ENCODE measurements at regions of chr5 and their contacts with region 1.

Region 1: DNA sequence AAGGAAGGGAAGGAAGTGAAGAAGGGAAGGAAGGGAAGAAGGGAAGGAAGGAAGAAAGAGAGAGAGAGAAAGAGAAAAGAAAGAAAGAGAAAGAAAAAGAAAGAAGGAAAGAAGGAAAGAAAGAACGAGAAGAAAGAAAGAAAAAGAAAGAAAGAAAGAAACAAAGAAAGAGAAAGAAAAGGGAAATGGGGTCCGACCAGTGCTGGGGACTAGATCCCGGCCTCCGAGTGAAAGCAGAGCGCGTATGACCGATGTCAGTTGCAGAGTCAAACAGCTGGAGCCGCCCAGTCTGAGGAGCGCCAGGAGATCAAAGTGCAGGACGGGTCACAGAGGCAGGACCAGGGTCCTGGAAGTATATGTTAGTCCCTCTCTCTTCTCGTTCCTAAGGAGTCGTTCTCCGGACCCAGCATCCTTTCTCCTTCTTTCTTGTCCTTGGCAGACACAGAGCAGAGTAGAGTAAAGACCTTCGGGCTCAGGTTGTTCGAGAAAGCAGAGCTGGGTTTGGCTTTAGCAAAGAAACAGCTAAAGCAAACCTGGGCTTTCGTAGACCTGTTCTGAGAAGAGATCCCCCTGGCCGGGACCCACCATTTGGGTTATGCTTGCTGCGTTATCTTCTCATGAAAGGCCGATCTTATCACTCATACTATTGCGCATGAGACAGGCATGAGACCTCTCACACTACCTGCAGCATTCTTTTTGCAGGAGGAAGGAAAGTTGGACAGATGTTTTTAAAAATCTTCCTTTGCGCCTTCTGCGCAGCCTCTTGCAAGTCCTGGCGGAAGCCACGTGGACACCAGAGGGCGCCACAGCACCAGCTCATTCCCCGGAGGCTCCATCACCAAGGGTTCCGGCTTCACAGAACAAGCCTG is 305.2 kb upstream of the MSX2 start:
- DNase-seq: peak; percentile 60 to 83 (median 73)
- ATAC-seq: peak; percentile 57
- H3K4me3 ChIP-seq: peak overlapping the region; percentile 24 to 32
- H3K4me3 Mint-ChIP-seq: peak overlapping the region; percentile 73
- H3K27ac ChIP-seq: no peak overlapping the region
- H3K27ac Mint-ChIP-seq: no peak overlapping the region
- H3K4me1 ChIP-seq: peaks cover 7% of the 10 kb centered on the region
- H3K4me1 Mint-ChIP-seq: peaks cover 13% of the 10 kb centered on the region
- H3K27me3 ChIP-seq: peaks cover 0 to 4% of the 10 kb centered on the region in 2 experiments
- H3K27me3 Mint-ChIP-seq: peaks cover 28% of the 10 kb centered on the region
- CTCF ChIP-seq: peak; percentile 58

Region 2: DNA sequence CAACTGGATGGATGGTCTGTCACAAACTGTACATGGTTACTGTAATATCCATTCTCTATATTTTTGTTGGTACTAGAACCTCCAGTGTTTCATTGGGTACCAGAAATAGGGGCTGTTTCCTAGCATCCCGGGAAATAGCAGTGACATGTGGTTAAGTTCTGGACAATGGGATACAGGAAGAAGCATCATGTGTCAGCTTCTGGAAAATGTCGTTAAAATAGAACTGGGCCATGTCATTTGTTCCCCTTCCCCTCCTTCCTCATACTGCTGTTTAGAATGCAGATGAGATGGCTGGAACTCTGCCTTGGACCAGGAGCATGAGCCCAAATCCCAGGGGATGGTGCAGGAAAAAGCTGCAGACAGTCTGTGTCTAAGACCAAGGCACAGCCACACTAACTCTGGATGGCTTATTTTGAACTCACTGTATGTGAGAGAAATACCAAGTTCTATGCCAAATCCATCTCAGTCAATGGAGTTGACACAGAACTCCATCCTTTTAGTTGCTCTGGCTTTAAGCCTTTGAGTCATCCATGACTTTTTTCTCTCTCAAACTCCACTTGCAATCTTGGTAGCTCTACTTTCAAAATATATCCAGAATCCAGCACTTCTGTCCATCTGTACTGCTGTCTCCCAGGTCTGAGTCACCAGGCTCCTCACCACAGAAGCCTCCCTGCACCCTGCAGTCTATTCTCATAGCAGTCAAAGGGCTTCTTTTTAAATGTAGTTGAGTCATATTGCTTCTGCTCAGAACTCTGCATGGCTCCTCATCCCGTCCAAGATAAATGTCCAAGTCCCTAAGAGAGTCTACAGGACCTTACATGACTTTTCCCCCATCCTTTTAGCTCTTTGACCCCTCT is 189.4 kb before region 1 on chr5:
- CTCF ChIA-PET with region 1: no interaction called
- POLR2A ChIA-PET with region 1: no interaction called
- intact Hi-C with region 1: no loop called
- DNase-seq: no peak
- ATAC-seq: no peak
- H3K4me3 ChIP-seq: no peak overlapping the region
- H3K4me3 Mint-ChIP-seq: no peak overlapping the region
- H3K27ac ChIP-seq: no peak overlapping the region
- H3K27ac Mint-ChIP-seq: no peak overlapping the region
- H3K4me1 ChIP-seq: no peaks in the 10 kb centered on the region
- H3K4me1 Mint-ChIP-seq: no peaks in the 10 kb centered on the region
- H3K27me3 ChIP-seq: no peaks in the 10 kb centered on the region
- H3K27me3 Mint-ChIP-seq: peaks cover 15% of the 10 kb centered on the region
- CTCF ChIP-seq: no peak

Region 3: DNA sequence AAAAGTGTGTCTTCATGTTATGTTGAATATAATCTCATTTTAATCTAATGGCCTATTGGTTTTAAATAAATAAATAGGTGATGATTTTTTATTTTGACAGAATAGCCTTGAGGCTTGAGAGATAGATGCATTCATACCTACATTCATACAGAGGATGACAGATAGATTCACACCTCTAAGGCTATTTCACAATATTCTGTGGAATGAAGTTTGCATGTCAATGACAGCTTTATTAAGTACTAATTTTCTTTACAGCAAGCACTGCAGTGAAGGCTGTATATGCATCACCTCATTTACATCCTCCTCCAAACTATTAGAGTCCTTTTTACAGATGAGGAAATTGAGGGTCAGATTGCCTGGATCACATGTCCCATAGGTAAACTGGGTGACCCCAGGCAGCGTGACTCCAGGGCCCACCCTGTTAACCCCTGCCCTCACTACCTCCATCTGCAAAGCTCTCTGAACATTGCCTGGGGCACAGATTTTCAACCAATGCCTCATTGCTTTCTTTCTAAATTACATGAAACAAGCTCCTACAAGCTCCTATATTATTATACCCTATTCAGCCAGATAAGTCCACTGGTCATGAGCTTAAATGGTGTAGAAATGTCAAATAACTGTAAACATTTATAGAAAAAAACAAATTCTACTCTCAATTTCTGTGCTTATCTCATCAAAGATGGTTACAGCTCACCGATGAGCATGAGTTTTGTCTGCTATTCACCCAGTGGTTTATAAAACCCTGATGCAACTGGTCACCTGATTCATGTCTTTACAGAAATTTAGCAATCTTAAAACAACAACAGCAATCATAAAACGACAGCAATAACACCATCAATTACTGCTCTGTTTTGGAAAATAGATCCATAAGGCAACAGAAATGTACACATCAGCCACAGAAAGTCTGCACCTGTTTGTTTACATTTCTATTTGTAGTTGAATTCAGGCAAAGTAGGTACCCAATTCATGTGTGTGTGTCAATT is 35.7 kb before region 1 on chr5:
- CTCF ChIA-PET with region 1: no interaction called
- POLR2A ChIA-PET with region 1: no interaction called
- intact Hi-C with region 1: no loop called
- DNase-seq: no peak
- ATAC-seq: no peak
- H3K4me3 ChIP-seq: no peak overlapping the region
- H3K4me3 Mint-ChIP-seq: no peak overlapping the region
- H3K27ac ChIP-seq: no peak overlapping the region
- H3K27ac Mint-ChIP-seq: no peak overlapping the region
- H3K4me1 ChIP-seq: no peaks in the 10 kb centered on the region
- H3K4me1 Mint-ChIP-seq: no peaks in the 10 kb centered on the region
- H3K27me3 ChIP-seq: no peaks in the 10 kb centered on the region
- H3K27me3 Mint-ChIP-seq: peaks cover 19% of the 10 kb centered on the region
- CTCF ChIP-seq: no peak

Region 4: DNA sequence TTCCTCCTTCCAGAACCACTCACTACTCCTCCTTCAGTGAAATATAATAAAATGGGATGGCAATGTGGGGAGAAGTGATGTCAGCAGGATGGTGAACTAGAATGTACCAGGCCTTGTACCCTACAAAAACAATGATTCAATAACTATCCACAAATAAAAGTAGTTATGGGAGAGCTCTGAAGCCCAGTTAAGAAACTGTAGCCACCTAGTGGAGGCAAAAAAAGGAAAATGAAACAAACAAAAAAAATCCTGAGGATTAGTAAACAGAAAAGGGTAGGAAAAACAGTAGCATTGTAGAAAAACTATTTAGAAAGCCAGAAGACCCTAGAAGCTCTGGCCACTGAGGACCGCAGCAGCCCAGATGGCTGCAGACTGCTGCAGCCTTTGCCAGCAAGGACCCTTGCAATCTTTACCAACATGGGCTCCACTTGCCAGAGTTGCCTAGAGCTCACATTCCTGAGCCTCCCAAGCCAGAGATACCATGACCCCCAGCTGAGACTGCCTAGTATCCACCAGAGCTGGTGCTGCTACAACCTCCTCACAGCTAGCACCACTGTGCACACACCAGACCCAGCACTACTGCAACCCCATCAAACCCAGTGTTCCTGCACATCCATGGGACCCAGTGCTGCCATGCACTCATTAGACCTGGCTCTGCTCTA is 45.5 kb after region 1 on chr5:
- CTCF ChIA-PET with region 1: interaction called, 5 read pairs
- POLR2A ChIA-PET with region 1: no interaction called
- intact Hi-C with region 1: loop called in 1 of 2 experiments (anchors 1 kb)
- DNase-seq: no peak
- ATAC-seq: no peak
- H3K4me3 ChIP-seq: no peak overlapping the region
- H3K4me3 Mint-ChIP-seq: no peak overlapping the region
- H3K27ac ChIP-seq: no peak overlapping the region
- H3K27ac Mint-ChIP-seq: no peak overlapping the region
- H3K4me1 ChIP-seq: no peaks in the 10 kb centered on the region
- H3K4me1 Mint-ChIP-seq: peaks cover 11% of the 10 kb centered on the region
- H3K27me3 ChIP-seq: no peaks in the 10 kb centered on the region
- H3K27me3 Mint-ChIP-seq: peaks cover 3% of the 10 kb centered on the region
- CTCF ChIP-seq: no peak

Region 5: GRCh38 chr5:174793684-174794328 is 374.6 kb after region 1 on chr5:
- CTCF ChIA-PET with region 1: interaction called, 16 read pairs
- POLR2A ChIA-PET with region 1: no interaction called
- intact Hi-C with region 1: loop called in 1 of 2 experiments (anchors 1 kb)
- DNase-seq: peak in 7 of 9 experiments; percentile 17 to 50 (median 30)
- ATAC-seq: no peak
- H3K4me3 ChIP-seq: no peak overlapping the region
- H3K4me3 Mint-ChIP-seq: no peak overlapping the region
- H3K27ac ChIP-seq: no peak overlapping the region
- H3K27ac Mint-ChIP-seq: no peak overlapping the region
- H3K4me1 ChIP-seq: no peaks in the 10 kb centered on the region
- H3K4me1 Mint-ChIP-seq: peaks cover 4% of the 10 kb centered on the region
- H3K27me3 ChIP-seq: peaks cover 0 to 5% of the 10 kb centered on the region in 2 experiments
- H3K27me3 Mint-ChIP-seq: peaks cover 43% of the 10 kb centered on the region
- CTCF ChIP-seq: peak; percentile 56

Region 6: DNA sequence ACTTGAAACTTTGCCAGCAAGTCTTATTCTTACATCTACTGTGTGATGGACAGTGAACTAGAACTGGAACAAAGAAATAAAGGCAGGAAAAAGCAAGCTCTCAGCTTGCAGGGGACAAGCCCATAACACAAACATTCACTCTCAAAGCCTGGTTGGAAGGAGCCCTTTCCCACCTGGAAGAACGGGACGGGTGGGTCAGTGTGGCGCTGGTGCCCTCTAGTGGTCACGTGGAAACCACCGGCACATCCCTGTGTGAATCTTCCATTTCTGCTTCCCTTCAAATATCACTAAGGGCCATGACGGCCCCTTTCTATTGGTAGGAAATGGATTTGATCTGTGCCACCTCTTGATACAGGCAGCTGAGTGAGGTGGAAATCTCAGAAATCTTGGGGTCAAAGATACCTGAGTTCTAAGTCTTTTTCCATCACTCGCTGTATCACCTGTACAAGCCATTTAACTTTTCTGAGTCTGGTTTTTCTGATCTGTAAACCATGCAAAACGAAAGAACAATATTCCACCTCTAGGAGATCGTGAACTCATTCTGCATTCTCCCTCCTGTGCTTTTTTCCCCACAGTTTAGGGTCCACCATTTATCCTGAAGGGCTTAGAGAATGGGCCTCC is 516.8 kb after region 1 on chr5:
- CTCF ChIA-PET with region 1: interaction called, 14 read pairs
- POLR2A ChIA-PET with region 1: no interaction called
- intact Hi-C with region 1: loop called in 1 of 2 experiments (anchors 1 kb)
- DNase-seq: peak in 6 of 9 experiments; percentile 11 to 56 (median 34)
- ATAC-seq: no peak
- H3K4me3 ChIP-seq: no peak overlapping the region
- H3K4me3 Mint-ChIP-seq: no peak overlapping the region
- H3K27ac ChIP-seq: no peak overlapping the region
- H3K27ac Mint-ChIP-seq: no peak overlapping the region
- H3K4me1 ChIP-seq: no peaks in the 10 kb centered on the region
- H3K4me1 Mint-ChIP-seq: no peaks in the 10 kb centered on the region
- H3K27me3 ChIP-seq: no peaks in the 10 kb centered on the region
- H3K27me3 Mint-ChIP-seq: peaks cover 18% of the 10 kb centered on the region
- CTCF ChIP-seq: peak; percentile 83